Activated CD8-positive, alpha-beta memory T cell treated with anti-CD3 and anti-CD28 coated beads, Interleukin-2, amount 10 ng/mL, durations not matched to agents 7 days and 5 days (primary cell): ENCODE measurements at regions of chr4 and their contacts with region 1.

Region 1: GRCh38 chr4:82428969-82429727 is 1.1 kb downstream of the HNRNPDL start:
- DNase-seq: peak; percentile 93
- ATAC-seq: peak; percentile 56
- H3K4me3 Mint-ChIP-seq: peak overlapping the region; percentile 97
- H3K27ac Mint-ChIP-seq: peak overlapping the region; percentile 98
- H3K4me1 Mint-ChIP-seq: peaks cover 65% of the 10 kb centered on the region
- H3K27me3 Mint-ChIP-seq: no peaks in the 10 kb centered on the region

Region 2: DNA sequence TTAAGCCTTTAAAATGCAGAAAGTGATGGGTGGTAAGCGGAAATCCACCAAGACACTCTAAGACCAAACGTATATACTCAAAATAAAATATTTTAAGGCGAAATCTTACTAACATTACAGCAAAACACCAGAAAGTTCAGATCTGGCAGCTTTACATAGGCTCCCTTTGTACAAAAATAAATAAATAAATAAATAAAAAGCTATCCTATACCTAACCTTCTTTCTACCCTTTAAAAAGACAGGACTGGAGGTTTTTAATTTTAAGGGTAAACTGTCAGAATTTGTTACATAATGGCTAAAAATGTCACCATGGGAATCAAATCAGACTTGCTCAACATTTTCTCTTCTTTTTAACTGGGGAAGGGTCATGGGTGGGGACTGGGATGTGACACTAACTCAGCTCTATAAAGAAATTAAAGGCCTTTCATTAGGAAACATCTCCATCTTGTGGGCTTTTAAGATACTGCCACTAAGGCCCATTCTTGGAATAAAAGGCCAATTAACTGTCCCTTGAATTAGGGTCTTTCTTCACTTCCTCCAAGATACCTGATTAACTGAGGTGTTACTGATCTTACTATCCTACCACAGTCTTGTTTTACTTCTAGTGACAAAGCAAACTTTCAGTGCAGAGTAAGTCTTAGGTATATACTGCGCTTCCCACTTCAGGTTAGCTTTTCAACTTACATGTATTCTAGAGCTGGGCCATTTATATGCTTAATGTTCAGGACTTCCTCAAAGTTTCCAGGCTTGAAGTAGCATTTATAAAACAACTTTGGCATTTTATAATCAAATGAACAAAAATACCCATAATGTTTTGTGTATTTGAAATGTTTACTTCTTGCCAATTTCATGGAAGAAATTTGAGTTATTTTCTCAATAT is 68.6 kb before region 1 on chr4:
- CTCF ChIA-PET with region 1: interaction called, 18 read pairs
- DNase-seq: no peak
- ATAC-seq: peak; percentile 56
- H3K4me3 Mint-ChIP-seq: no peak overlapping the region
- H3K27ac Mint-ChIP-seq: peak overlapping the region; percentile 68
- H3K4me1 Mint-ChIP-seq: peaks cover 84% of the 10 kb centered on the region
- H3K27me3 Mint-ChIP-seq: no peaks in the 10 kb centered on the region

Region 3: DNA sequence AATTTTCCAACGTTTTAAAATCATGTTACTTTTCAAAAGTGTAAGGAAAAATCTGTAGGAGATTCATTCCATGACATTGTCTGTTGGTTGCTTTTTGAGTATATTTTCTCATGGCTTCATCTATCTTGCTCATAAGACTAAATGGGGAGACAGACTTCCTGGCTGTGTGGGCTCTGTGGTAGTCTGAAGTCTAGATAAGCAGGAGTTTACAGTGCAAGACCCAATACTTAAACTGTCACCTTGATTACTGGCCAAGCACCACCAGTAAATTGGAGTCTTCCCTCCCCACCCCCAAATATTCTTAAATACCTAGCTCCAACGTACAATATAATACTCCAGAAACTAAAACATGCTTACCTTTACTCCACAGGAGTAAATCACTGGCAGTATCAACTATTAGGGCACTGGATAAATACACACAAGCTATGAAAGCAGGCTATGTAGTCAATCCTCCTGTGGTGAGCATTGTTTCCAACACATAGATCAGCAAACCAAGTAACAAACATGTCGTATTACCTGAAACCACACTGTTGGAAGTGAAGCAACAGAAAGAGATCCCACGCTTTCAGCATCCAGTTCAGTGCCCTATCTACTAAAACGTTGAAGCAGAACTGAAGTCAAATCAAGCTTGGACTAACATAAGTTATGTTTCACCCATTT is 61.6 kb before region 1 on chr4:
- CTCF ChIA-PET with region 1: interaction called, 23 read pairs
- DNase-seq: no peak
- ATAC-seq: peak; percentile 34
- H3K4me3 Mint-ChIP-seq: peak overlapping the region; percentile 32
- H3K27ac Mint-ChIP-seq: peak overlapping the region; percentile 68
- H3K4me1 Mint-ChIP-seq: peaks cover 77% of the 10 kb centered on the region
- H3K27me3 Mint-ChIP-seq: no peaks in the 10 kb centered on the region

Region 4: GRCh38 chr4:82373816-82374625 is 55.1 kb before region 1 on chr4 and contains the start of gene HNRNPD:
- CTCF ChIA-PET with region 1: interaction called, 23 read pairs
- DNase-seq: peak; percentile 98
- ATAC-seq: peak; percentile 88
- H3K4me3 Mint-ChIP-seq: peak within 1 kb of the TSS; percentile 94
- H3K27ac Mint-ChIP-seq: peak within 1 kb of the TSS; percentile 100
- H3K4me1 Mint-ChIP-seq: peaks cover 38% of the 10 kb centered on the region
- H3K27me3 Mint-ChIP-seq: no peaks in the 10 kb centered on the region
- total RNA-seq, gene HNRNPD: 385 to 421 TPM